AG04450 (cell line): ENCODE measurements at regions of chr15 and their contacts with region 1.

Region 1: DNA sequence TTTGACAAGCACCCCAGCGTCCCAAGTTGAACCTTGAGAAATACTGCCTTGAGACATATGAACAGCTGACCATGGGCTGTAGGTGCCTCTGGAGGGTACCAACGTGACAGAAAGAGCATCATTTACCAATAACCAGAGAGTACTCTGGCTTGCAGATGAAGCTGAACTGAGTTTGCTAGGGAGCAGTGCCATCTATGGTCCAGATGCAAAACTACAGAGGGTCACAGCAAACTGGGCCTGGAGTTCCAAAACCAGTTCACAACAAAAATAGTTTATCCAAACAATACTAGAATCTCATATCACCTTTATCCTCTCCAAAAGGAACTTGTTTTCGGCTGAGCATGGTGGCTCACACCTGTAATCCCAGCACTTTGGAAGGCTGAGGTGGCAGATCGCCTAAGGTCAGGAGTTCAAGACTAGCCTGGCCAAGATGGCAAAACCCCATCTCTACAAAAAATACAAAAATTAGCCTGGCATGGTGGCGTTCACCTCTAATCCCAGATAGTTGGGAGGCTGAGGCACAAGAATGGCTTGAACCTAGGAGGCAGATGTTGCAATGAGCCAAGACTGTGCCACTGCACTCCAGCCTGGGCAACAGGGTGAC is 69.3 kb downstream of the CHAC1 start:
- DNase-seq: peak; percentile 51
- H3K4me3 ChIP-seq: no peak overlapping the region
- H3K27ac ChIP-seq: no peak overlapping the region
- H3K27me3 ChIP-seq: no peaks in the 10 kb centered on the region
- CTCF ChIP-seq: peak; percentile 94

Region 2: DNA sequence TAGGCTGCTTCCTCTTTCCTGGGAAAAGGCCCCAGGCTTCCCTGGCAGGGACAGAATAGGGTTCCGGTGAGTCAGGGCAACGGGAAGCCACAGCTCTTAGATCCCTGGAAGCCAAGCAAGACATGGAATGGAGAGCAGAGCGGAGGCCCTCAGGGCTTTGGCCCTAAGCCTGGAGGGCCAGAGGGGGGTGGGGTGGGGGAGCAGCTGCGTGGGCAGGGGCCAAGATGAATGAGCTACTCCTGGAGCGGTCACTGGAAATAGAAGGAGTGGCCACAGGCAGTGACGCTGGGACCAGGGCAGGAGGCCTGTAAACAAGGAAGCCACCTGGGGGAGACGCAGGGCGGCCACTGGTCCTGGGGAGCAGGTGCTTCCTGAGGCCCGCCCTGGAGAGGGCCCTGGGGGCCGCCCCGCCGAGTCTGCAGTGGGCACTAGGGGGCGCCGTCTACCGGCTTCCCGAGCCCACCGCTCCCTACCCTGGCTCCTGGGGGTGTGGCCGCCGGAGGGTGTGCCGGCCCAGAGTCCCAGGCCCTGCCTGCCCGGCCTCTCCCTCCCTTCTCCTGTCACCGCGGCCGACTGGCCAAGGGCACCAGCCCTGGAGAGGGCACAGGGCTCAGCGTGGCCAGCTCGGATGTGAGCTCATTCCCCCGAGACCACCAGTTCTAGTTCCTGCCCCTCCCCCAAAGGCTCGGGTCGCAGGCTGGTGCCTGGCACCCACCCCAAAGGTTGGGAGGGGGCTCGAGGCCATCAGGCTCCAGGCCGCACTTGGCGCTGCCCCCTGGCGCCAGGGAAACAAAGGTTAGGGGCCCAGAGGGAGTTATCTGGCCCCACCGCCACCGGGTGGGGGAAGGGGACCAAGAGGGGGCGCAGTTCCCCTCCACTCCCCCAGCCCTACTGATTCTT is 116.2 kb before region 1 on chr15:
- CTCF ChIA-PET with region 1: interaction called, 202 read pairs
- POLR2A ChIA-PET with region 1: no interaction called
- DNase-seq: peak; percentile 86
- H3K4me3 ChIP-seq: peak overlapping the region; percentile 48
- H3K27ac ChIP-seq: peak overlapping the region; percentile 94
- H3K27me3 ChIP-seq: no peaks in the 10 kb centered on the region
- CTCF ChIP-seq: peak; percentile 80

Region 3: GRCh38 chr15:40928821-40929659 is 93.5 kb before region 1 on chr15 and contains the start of gene DLL4:
- CTCF ChIA-PET with region 1: interaction called, 11 read pairs
- POLR2A ChIA-PET with region 1: interaction called, 7 read pairs
- DNase-seq: peak; percentile 24
- H3K4me3 ChIP-seq: peak within 1 kb of the TSS; percentile 63
- H3K27ac ChIP-seq: no peak within 1 kb of the TSS
- H3K27me3 ChIP-seq: peaks cover 42% of the 10 kb centered on the region
- CTCF ChIP-seq: no peak
- polyA plus RNA-seq, gene DLL4: 1.5 and 2.6 TPM in 2 replicates

Region 4: GRCh38 chr15:41180206-41180789 is 157.7 kb after region 1 on chr15:
- CTCF ChIA-PET with region 1: interaction called, 27 read pairs
- POLR2A ChIA-PET with region 1: no interaction called
- DNase-seq: no peak
- H3K4me3 ChIP-seq: no peak overlapping the region
- H3K27ac ChIP-seq: no peak overlapping the region
- H3K27me3 ChIP-seq: no peaks in the 10 kb centered on the region
- CTCF ChIP-seq: no peak